GM12878 (cell line): ENCODE measurements at regions of chr5 and their contacts with region 1.

Region 1: DNA sequence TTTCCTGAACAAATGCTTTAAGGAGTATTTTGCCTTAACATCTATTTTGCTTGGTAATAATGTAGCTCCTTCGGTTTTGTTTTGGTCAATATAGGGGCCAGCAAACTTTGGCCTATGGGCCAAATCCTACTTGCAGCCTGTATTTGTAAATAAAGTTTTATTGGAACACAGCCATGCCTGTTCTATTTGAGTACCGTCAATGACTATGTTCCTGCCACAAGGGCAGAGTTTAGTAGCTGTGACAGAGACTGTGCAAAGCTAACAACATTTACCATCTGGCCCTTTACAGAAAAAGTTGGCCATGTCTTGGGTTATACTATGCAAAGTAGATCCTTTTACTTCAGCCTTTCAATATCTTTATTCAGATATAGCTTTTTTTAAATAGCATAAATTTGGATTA is 113.4 kb downstream of the NR3C1 start:
- DNase-seq: no peak
- ATAC-seq: peak; percentile 45; the same call in 2 of the 3 replicates
- H3K4me3 ChIP-seq: no peak overlapping the region
- H3K27ac ChIP-seq: no peak overlapping the region
- H3K4me1 ChIP-seq: no peaks in the 10 kb centered on the region
- H3K27me3 ChIP-seq: no peaks in the 10 kb centered on the region
- CTCF ChIP-seq: no peak
- EP300 ChIP-seq: no peak
- POLR2A ChIP-seq: no peak
- RAD21 ChIP-seq: no peak

Region 2: GRCh38 chr5:141973871-141974595 is 1316.1 kb before region 1 on chr5:
- CTCF ChIA-PET with region 1: no interaction called
- POLR2A ChIA-PET with region 1: no interaction called
- RAD21 ChIA-PET with region 1: no interaction called
- SMC1A ChIA-PET with region 1: no interaction called
- in situ Hi-C with region 1: no loop called
- intact Hi-C with region 1: no loop called
- DNase-seq: no peak
- ATAC-seq: no peak
- H3K4me3 ChIP-seq: no peak overlapping the region
- H3K27ac ChIP-seq: no peak overlapping the region
- H3K4me1 ChIP-seq: peaks cover 5% of the 10 kb centered on the region; the same call in 1 of the 2 replicates
- H3K27me3 ChIP-seq: no peaks in the 10 kb centered on the region
- CTCF ChIP-seq: no peak
- EP300 ChIP-seq: no peak
- POLR2A ChIP-seq: no peak
- RAD21 ChIP-seq: no peak

Region 3: GRCh38 chr5:143074414-143074996 is 215.6 kb before region 1 on chr5:
- CTCF ChIA-PET with region 1: no interaction called
- POLR2A ChIA-PET with region 1: no interaction called
- RAD21 ChIA-PET with region 1: no interaction called
- SMC1A ChIA-PET with region 1: no interaction called
- in situ Hi-C with region 1: no loop called
- intact Hi-C with region 1: no loop called
- DNase-seq: no peak
- ATAC-seq: no peak
- H3K4me3 ChIP-seq: no peak overlapping the region
- H3K27ac ChIP-seq: no peak overlapping the region
- H3K4me1 ChIP-seq: no peaks in the 10 kb centered on the region
- H3K27me3 ChIP-seq: no peaks in the 10 kb centered on the region
- CTCF ChIP-seq: no peak
- EP300 ChIP-seq: no peak
- POLR2A ChIP-seq: no peak
- RAD21 ChIP-seq: no peak

Region 4: GRCh38 chr5:143195491-143195890 is 94.6 kb before region 1 on chr5:
- CTCF ChIA-PET with region 1: no interaction called
- POLR2A ChIA-PET with region 1: no interaction called
- RAD21 ChIA-PET with region 1: no interaction called
- SMC1A ChIA-PET with region 1: no interaction called
- in situ Hi-C with region 1: no loop called
- intact Hi-C with region 1: no loop called
- DNase-seq: no peak
- ATAC-seq: no peak
- H3K4me3 ChIP-seq: no peak overlapping the region
- H3K27ac ChIP-seq: no peak overlapping the region
- H3K4me1 ChIP-seq: no peaks in the 10 kb centered on the region
- H3K27me3 ChIP-seq: no peaks in the 10 kb centered on the region
- CTCF ChIP-seq: no peak
- EP300 ChIP-seq: no peak
- POLR2A ChIP-seq: no peak
- RAD21 ChIP-seq: no peak

Region 5: DNA sequence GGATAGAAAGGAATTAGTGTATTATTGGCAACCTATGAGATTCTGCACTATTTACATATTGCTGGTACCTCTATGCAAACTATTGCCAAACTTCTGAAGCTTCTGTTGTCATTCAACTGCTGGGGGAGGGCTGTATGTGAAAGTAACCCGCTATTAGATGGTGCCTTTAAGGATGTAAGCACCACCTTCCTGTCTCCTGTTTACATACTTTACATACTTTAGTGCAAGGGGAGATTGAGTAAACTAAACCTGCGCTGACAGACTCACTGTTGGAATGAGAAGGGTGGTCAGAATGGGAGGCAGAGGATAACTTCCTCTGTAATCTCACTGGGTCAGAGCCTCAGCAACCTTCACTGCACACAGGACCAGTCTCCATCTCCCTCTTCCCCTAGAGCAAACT is 10.4 kb before region 1 on chr5:
- CTCF ChIA-PET with region 1: interaction called, 7 read pairs
- POLR2A ChIA-PET with region 1: interaction called, 9 read pairs
- RAD21 ChIA-PET with region 1: no interaction called
- SMC1A ChIA-PET with region 1: interaction called, 83 read pairs
- in situ Hi-C with region 1: no loop called
- intact Hi-C with region 1: no loop called
- DNase-seq: no peak
- ATAC-seq: peak; percentile 22; the same call in 2 of the 3 replicates
- H3K4me3 ChIP-seq: no peak overlapping the region
- H3K27ac ChIP-seq: no peak overlapping the region
- H3K4me1 ChIP-seq: no peaks in the 10 kb centered on the region
- H3K27me3 ChIP-seq: no peaks in the 10 kb centered on the region
- CTCF ChIP-seq: no peak
- EP300 ChIP-seq: no peak
- POLR2A ChIP-seq: no peak
- RAD21 ChIP-seq: no peak